AG04450 (cell line): ENCODE measurements at regions of chr11 and their contacts with region 1.

Region 1: GRCh38 chr11:59417023-59417422 is 9.2 kb downstream of the OR5A2 start:
- DNase-seq: no peak
- H3K4me3 ChIP-seq: no peak overlapping the region
- H3K27ac ChIP-seq: no peak overlapping the region
- H3K27me3 ChIP-seq: no peaks in the 10 kb centered on the region
- CTCF ChIP-seq: no peak

Region 2: GRCh38 chr11:59429924-59430516 is 13.0 kb after region 1 on chr11:
- CTCF ChIA-PET with region 1: interaction called, 10 read pairs
- POLR2A ChIA-PET with region 1: no interaction called
- DNase-seq: peak; percentile 18
- H3K4me3 ChIP-seq: no peak overlapping the region
- H3K27ac ChIP-seq: no peak overlapping the region
- H3K27me3 ChIP-seq: no peaks in the 10 kb centered on the region
- CTCF ChIP-seq: peak; percentile 85